Naive thymus-derived CD4-positive, alpha-beta T cell (primary cell): ENCODE measurements at regions of chr7 and their contacts with region 1.

Region 1: DNA sequence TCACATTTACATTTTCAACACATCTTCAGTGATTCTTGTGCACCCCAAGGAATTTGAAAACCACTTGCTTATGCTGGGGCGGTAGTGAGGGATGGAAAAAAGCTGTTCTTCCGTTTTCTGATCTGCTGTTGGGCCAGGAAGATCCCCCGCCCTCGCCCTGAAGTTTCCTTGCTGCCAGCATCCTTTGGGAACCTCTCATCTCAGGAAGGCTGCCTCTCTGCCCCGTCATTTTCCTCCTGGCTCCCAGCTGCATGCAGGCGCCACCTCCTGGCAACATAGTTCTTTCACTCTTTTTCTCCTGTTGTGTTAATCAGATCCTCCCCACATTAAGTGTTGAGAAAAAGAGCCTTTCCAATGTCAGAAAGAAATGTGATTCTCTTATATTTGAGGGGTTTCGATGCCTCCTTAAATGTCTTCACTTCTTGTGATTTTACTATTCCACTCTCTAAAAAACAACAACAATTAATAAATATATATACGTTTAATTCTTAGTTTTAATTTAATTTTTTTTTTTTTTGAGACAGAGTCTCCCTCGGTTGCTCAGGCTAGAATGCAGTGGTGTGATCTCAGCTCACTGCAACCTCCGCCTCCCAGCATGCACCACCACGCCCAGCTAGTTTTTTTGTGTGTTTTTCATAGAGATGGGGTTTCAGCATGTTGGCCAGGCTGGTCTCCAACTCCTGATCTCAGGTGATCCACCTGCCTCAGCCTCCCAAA is 122.9 kb downstream of the RALA start:
- DNase-seq: peak; percentile 17 to 61 (median 45)
- ATAC-seq: peak; percentile 60
- H3K4me3 ChIP-seq: no peak overlapping the region
- H3K4me3 Mint-ChIP-seq: peak overlapping the region in 1 of 10 donors; percentile 1
- H3K27ac ChIP-seq: no peak overlapping the region
- H3K27ac Mint-ChIP-seq: peak overlapping the region in 6 of 9 donors; percentile 0 to 77 (median 24)
- H3K4me1 ChIP-seq: no peaks in the 10 kb centered on the region
- H3K4me1 Mint-ChIP-seq: peaks cover 0 to 8% (median 6%) of the 10 kb centered on the region in 7 donors
- H3K27me3 ChIP-seq: no peaks in the 10 kb centered on the region
- H3K27me3 Mint-ChIP-seq: no peaks in the 10 kb centered on the region

Region 2: DNA sequence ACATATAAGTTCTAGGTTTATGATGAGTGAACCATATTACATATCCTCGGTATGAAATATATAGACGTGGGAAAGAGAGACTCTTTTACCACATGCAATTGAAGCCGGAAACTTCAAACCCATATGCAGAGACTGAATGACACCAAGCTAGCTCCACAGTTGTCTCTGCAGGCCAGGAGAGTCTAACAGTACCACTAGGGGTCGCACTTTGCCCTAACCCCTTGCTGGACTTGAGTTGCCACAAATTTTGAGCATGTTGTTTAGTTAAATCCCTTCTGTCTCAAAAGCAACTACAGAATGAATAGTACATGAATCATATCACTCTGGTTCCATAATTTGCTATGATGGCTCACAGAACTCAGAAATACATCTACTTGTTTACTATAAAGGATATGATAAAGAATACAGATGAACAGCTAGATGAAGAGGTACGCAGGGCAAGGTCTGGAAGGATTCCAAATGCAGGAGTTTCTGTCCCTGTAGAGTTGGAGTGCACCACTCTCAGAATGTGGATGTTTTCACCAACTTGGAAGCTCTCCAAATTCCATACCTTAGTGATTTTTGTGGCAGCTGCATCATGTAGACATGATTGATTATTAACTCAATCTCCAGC is 292.4 kb before region 1 on chr7:
- CTCF ChIA-PET with region 1: no interaction called
- POLR2A ChIA-PET with region 1: no interaction called
- intact Hi-C with region 1: loop called (anchors 5 to 10 kb)
- DNase-seq: peak in 7 of 9 donors; percentile 27 to 53 (median 46)
- ATAC-seq: peak; percentile 74
- H3K4me3 ChIP-seq: no peak overlapping the region
- H3K4me3 Mint-ChIP-seq: no peak overlapping the region
- H3K27ac ChIP-seq: no peak overlapping the region
- H3K27ac Mint-ChIP-seq: no peak overlapping the region
- H3K4me1 ChIP-seq: no peaks in the 10 kb centered on the region
- H3K4me1 Mint-ChIP-seq: no peaks in the 10 kb centered on the region
- H3K27me3 ChIP-seq: no peaks in the 10 kb centered on the region
- H3K27me3 Mint-ChIP-seq: peaks cover 4 to 15% (median 12%) of the 10 kb centered on the region in 5 donors

Region 3: DNA sequence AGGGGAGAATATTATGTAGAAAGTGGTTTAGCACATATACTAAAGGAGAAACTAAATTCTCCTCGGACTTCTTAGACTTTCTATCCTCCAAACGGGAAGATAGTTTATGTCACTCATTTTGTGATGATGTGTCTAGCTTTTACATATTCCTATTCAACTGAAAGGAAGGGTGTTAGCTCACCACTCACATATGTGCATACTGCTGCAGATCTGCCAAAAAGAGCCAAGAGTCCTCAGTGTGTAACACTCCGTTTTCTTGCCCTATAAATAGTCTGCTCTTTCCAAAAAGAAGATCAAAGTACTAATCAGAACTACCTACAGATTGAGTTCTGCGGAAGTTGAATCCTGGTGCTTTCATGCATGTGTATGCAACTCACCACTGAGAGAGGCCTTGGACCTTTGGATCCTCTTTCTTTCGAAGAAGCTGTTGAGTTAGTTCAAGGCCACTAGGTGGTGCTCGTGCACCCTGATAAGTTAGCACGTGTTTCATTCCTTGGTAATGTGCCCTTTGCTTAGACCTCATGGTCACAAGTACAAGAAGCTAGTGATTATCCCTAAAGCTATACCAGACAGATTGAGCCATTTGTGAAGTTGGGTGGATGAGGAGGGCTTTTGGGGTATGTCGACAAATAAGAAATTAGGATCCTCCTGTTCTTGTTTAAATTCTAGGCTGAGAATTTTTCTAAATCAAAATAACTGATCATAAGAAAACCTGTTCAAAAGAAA is 165.9 kb before region 1 on chr7:
- CTCF ChIA-PET with region 1: interaction called, 336 read pairs
- POLR2A ChIA-PET with region 1: interaction called, 15 read pairs
- intact Hi-C with region 1: loop called (anchors 1 kb)
- DNase-seq: peak; percentile 38 to 79 (median 73)
- ATAC-seq: peak; percentile 98
- H3K4me3 ChIP-seq: no peak overlapping the region
- H3K4me3 Mint-ChIP-seq: no peak overlapping the region
- H3K27ac ChIP-seq: no peak overlapping the region
- H3K27ac Mint-ChIP-seq: peak overlapping the region in 5 of 9 donors; percentile 23 to 61 (median 44)
- H3K4me1 ChIP-seq: no peaks in the 10 kb centered on the region
- H3K4me1 Mint-ChIP-seq: peaks cover 2 to 12% (median 10%) of the 10 kb centered on the region in 7 donors
- H3K27me3 ChIP-seq: no peaks in the 10 kb centered on the region
- H3K27me3 Mint-ChIP-seq: no peaks in the 10 kb centered on the region

Region 4: GRCh38 chr7:39633563-39634477 is 112.4 kb before region 1 on chr7:
- CTCF ChIA-PET with region 1: interaction called, 3 read pairs
- POLR2A ChIA-PET with region 1: no interaction called
- intact Hi-C with region 1: loop called in 1 of 2 experiments (anchors 1 kb)
- DNase-seq: peak in 7 of 9 donors; percentile 53 to 76 (median 68)
- ATAC-seq: peak; percentile 93
- H3K4me3 ChIP-seq: peak overlapping the region; percentile 37
- H3K4me3 Mint-ChIP-seq: peak overlapping the region; percentile 71 to 92 (median 82)
- H3K27ac ChIP-seq: peak overlapping the region; percentile 79
- H3K27ac Mint-ChIP-seq: peak overlapping the region; percentile 92 to 99 (median 98)
- H3K4me1 ChIP-seq: peaks cover 18 to 29% of the 10 kb centered on the region in 2 donors
- H3K4me1 Mint-ChIP-seq: peaks cover 53 to 93% (median 72%) of the 10 kb centered on the region in 7 donors
- H3K27me3 ChIP-seq: no peaks in the 10 kb centered on the region
- H3K27me3 Mint-ChIP-seq: no peaks in the 10 kb centered on the region

Region 5: GRCh38 chr7:39709768-39710311 is 36.4 kb before region 1 on chr7:
- CTCF ChIA-PET with region 1: interaction called, 11 read pairs
- POLR2A ChIA-PET with region 1: no interaction called
- intact Hi-C with region 1: no loop called
- DNase-seq: no peak
- ATAC-seq: no peak
- H3K4me3 ChIP-seq: no peak overlapping the region
- H3K4me3 Mint-ChIP-seq: no peak overlapping the region
- H3K27ac ChIP-seq: no peak overlapping the region
- H3K27ac Mint-ChIP-seq: peak overlapping the region in 1 of 9 donors; percentile 2
- H3K4me1 ChIP-seq: no peaks in the 10 kb centered on the region
- H3K4me1 Mint-ChIP-seq: peaks cover 0 to 1% (median 0%) of the 10 kb centered on the region in 7 donors
- H3K27me3 ChIP-seq: no peaks in the 10 kb centered on the region
- H3K27me3 Mint-ChIP-seq: no peaks in the 10 kb centered on the region

Region 6: GRCh38 chr7:39732837-39733804 is 13.1 kb before region 1 on chr7:
- CTCF ChIA-PET with region 1: interaction called, 9 read pairs
- POLR2A ChIA-PET with region 1: interaction called, 9 read pairs
- intact Hi-C with region 1: loop called in 1 of 2 experiments (anchors 1 kb)
- DNase-seq: peak; percentile 80 to 96 (median 91)
- ATAC-seq: peak; percentile 95
- H3K4me3 ChIP-seq: peak overlapping the region; percentile 83
- H3K4me3 Mint-ChIP-seq: peak overlapping the region; percentile 78 to 95 (median 92)
- H3K27ac ChIP-seq: peak overlapping the region; percentile 82
- H3K27ac Mint-ChIP-seq: peak overlapping the region; percentile 93 to 98 (median 96)
- H3K4me1 ChIP-seq: peaks cover 11 to 27% of the 10 kb centered on the region in 2 donors
- H3K4me1 Mint-ChIP-seq: peaks cover 13 to 46% (median 40%) of the 10 kb centered on the region in 7 donors
- H3K27me3 ChIP-seq: no peaks in the 10 kb centered on the region
- H3K27me3 Mint-ChIP-seq: peaks cover 0 to 9% (median 0%) of the 10 kb centered on the region in 5 donors

Region 7: DNA sequence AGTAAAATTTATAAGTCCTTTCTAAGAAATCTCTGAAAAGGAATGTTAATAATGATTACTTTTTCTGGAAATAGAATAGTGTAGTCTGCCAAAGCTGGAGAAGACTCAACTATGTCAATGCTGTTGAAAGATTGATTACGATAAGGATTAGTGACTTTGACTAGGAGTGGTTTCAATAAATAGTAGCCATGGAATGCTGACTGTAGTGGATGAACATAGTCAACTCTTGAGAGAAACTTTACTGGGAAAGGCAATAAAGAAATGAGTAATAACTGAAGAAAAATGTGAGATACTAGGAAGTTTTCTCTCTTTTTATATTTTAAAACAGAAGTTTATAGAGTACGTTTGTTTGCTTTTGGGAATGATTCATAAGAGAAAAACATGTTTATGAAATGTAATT is 98.7 kb after region 1 on chr7:
- CTCF ChIA-PET with region 1: no interaction called
- POLR2A ChIA-PET with region 1: no interaction called
- intact Hi-C with region 1: no loop called
- DNase-seq: no peak
- ATAC-seq: no peak
- H3K4me3 ChIP-seq: no peak overlapping the region
- H3K4me3 Mint-ChIP-seq: no peak overlapping the region
- H3K27ac ChIP-seq: no peak overlapping the region
- H3K27ac Mint-ChIP-seq: no peak overlapping the region
- H3K4me1 ChIP-seq: no peaks in the 10 kb centered on the region
- H3K4me1 Mint-ChIP-seq: no peaks in the 10 kb centered on the region
- H3K27me3 ChIP-seq: no peaks in the 10 kb centered on the region
- H3K27me3 Mint-ChIP-seq: peaks cover 11 to 34% (median 25%) of the 10 kb centered on the region in 5 donors

Region 8: DNA sequence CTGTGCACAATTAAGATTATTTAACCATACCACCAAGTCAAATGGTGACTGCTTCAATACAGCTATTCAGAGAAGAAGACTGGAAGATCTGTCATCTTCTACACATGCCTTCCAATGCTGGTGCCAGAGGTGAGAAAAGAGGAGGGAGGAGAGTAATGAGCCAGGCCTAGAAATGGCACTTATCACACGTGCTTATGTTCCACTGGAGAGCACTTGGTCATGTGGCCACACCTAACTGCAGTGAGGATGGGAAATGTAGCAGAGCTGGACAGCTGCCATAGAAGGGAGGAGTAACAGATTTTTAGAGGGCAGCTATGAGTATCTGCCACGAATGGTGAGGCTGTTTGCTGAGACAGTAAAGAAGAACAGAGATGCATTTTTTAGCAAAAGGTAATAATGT is 311.0 kb after region 1 on chr7:
- CTCF ChIA-PET with region 1: interaction called, 6 read pairs
- POLR2A ChIA-PET with region 1: no interaction called
- intact Hi-C with region 1: loop called in 1 of 2 experiments (anchors 5 kb)
- DNase-seq: no peak
- ATAC-seq: no peak
- H3K4me3 ChIP-seq: no peak overlapping the region
- H3K4me3 Mint-ChIP-seq: no peak overlapping the region
- H3K27ac ChIP-seq: no peak overlapping the region
- H3K27ac Mint-ChIP-seq: peak overlapping the region in 6 of 9 donors; percentile 14 to 69 (median 44)
- H3K4me1 ChIP-seq: no peaks in the 10 kb centered on the region
- H3K4me1 Mint-ChIP-seq: peaks cover 4 to 22% (median 13%) of the 10 kb centered on the region in 7 donors
- H3K27me3 ChIP-seq: no peaks in the 10 kb centered on the region
- H3K27me3 Mint-ChIP-seq: no peaks in the 10 kb centered on the region